Heart right ventricle (tissue), 16 donors: ENCODE measurements at regions of chr17 and their contacts with region 1.

Region 1: GRCh38 chr17:67366193-67367157 is at the start of gene PSMD12:
- DNase-seq: peak; percentile 94 to 96
- ATAC-seq: peak; percentile 97 to 99 (median 98)
- H3K4me3 ChIP-seq: peak within 1 kb of the TSS; percentile 58 to 99 (median 90)
- H3K27ac ChIP-seq: peak within 1 kb of the TSS; percentile 81 to 99 (median 94)
- H3K4me1 ChIP-seq: peaks cover 0 to 49% (median 42%) of the 10 kb centered on the region in 9 donors
- H3K27me3 ChIP-seq: no peaks in the 10 kb centered on the region
- CTCF ChIP-seq: peak in 1 of 9 donors; percentile 26
- total RNA-seq, gene PSMD12: 44.5 to 67.1 (median 49.9) TPM

Region 2: GRCh38 chr17:67245073-67245755 is 121.3 kb before region 1 on chr17 and contains the start of gene HELZ:
- intact Hi-C with region 1: loop called in 1 of 10 experiments (anchors 10 kb)
- DNase-seq: peak; percentile 80 to 81
- ATAC-seq: peak; percentile 87 to 92 (median 90)
- H3K4me3 ChIP-seq: peak within 1 kb of the TSS; percentile 76 to 100 (median 98)
- H3K27ac ChIP-seq: peak within 1 kb of the TSS; percentile 65 to 97 (median 92)
- H3K4me1 ChIP-seq: peaks cover 5 to 55% (median 46%) of the 10 kb centered on the region in 9 donors
- H3K27me3 ChIP-seq: no peaks in the 10 kb centered on the region
- CTCF ChIP-seq: no peak
- total RNA-seq, gene HELZ: 27.4 to 50.3 (median 41.7) TPM